ENCODE measurements at regions of chr11 and their contacts with region 1.

Region 1: DNA sequence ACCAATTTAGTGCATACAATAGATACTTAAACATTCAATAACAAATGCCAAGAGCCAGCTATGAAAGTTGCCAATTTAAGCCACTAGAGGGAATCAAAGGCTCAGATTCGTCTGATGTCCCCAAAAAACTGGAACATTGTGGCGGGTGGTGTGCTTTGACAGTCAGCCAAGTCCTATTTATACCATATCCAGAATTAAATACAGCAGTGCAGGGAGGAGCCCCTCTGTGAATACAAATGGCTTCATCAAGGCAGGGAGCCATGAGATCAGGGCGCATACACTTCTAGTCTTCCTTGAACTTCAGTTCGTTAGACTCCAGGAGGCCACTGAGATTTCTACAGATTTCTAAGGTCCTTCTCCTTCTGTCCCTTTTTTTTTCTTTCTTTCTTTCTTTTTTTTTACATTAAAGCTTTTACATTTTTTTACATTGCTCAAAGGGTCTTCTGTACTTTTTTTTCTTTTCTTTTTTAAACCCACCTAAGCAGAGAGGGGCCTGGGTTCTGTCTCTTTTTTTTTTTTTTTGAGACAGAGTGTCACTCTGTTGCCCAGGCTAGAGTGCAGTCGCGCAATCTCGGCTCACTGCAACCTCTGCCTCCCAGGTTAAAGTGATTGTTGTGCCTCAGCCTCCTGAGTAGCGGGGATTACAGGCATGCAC is 41.5 kb upstream of the HSPA8 start:
- DNase-seq: peak; percentile 63 to 83 (median 69)
- ATAC-seq: peak; percentile 90
- H3K4me3 ChIP-seq: no peak overlapping the region
- H3K27ac ChIP-seq: no peak overlapping the region
- H3K4me1 ChIP-seq: no peaks in the 10 kb centered on the region
- H3K27me3 ChIP-seq: no peaks in the 10 kb centered on the region

Region 2: DNA sequence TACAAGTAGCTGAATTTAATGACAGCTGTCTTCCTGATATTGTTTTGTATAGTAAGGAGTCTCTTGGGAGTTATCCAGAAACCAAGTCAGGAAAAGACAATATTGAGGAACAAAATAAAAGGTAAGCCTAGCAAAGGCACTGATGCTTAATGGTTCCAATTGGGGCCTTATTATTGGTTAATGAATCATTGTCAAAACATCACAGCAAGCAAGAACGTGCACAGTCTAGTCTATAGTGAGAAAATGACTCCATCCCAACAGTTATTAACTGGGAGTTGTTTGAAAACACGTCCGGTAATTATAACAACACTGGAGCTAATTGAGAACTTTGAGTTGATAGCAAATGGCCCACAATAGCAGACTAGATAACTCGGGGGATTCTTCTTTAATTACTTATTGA is 139.5 kb before region 1 on chr11:
- intact Hi-C with region 1: no loop called
- DNase-seq: no peak
- ATAC-seq: no peak
- H3K4me3 ChIP-seq: no peak overlapping the region
- H3K27ac ChIP-seq: no peak overlapping the region
- H3K4me1 ChIP-seq: no peaks in the 10 kb centered on the region
- H3K27me3 ChIP-seq: no peaks in the 10 kb centered on the region

Region 3: DNA sequence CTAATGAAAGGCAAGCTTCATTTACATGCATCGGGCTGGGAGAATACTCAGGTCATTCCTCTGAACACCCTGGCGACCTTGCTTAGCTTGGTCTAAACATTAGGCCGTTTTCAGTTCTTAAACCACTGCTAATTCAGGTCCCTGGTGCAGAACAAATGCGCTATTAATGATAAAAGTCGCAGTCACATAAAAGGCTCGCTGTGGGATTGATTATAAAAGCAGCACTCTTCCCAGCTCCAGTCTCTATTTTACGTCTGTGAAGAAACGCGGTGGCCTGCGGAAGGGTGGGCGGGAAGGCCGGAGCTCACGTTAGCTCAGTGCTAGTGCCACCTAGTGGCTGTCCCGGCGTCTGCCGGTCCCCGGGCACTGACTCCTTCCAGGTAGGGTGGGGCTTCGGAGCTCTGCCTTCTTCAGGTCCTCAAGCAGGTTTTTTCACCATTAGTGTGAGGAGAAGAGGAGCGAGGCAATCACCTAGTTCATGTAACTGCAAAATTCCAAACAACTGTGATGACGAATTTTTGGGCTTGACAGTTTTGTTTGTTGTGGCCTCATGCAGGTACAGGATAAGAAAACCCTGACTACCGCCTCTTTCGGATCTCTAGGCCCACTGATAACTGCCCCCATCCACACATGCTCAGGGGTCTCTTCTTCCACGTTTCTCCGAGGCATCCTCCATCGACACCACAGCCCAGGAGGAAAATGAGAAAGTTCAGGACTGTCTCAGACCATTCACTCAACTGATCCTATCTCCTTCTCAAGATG is 158.1 kb after region 1 on chr11:
- intact Hi-C with region 1: loop called in 1 of 4 experiments (anchors 5 kb)
- DNase-seq: peak; percentile 85 to 95 (median 91)
- ATAC-seq: peak; percentile 92 to 94
- H3K4me3 ChIP-seq: no peak overlapping the region
- H3K27ac ChIP-seq: no peak overlapping the region
- H3K4me1 ChIP-seq: no peaks in the 10 kb centered on the region
- H3K27me3 ChIP-seq: no peaks in the 10 kb centered on the region

Region 4: DNA sequence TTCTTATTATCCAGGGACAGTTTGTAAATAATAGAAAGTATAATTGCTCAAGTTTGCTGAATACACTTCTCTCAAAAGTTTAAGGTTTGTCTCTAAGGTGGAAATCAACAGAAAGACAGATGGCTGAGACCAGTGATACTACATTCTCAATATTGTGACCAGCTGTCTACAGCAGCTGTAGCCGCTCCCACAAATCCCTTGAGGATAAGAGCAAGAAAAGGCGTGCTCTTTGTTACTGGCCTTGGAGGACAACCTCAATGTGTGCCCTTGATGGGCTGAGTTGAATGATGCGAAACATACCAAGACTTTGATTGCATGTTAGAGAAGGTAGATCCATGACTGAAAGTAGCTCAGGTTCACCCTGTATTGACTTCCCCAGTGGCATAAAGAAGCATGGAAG is 696.6 kb after region 1 on chr11:
- intact Hi-C with region 1: no loop called
- DNase-seq: no peak
- ATAC-seq: no peak
- H3K4me3 ChIP-seq: no peak overlapping the region
- H3K27ac ChIP-seq: no peak overlapping the region
- H3K4me1 ChIP-seq: peaks cover 1% of the 10 kb centered on the region
- H3K27me3 ChIP-seq: no peaks in the 10 kb centered on the region

Measured in right cardiac atrium (tissue), 5 donors.